GM13976 (cell line): ENCODE measurements at regions of chr9 and their contacts with region 1.

Region 1: DNA sequence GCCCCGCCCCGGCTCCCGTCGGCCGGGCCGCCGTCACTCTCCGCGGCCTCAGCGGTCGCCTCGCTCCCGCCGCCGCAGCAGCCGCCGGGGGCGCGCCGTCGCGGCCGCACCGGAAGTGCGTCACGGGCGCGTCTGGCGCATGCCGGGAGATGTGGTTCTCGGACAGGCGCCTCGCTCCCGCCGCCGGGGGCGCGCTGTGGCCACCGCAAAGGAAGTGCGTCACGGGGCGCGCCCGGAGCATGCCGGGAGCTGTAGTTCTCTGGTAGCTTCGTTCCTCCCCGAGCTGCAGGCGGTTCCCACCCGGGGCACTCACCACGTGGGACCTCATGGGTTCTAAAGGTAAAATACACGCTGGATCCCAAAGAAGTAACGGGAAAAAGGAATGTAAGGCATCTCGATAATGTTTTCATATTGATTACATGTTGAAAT is at the start of gene UBAC1:
- DNase-seq: peak; percentile 100
- CTCF ChIP-seq: no peak

Region 2: DNA sequence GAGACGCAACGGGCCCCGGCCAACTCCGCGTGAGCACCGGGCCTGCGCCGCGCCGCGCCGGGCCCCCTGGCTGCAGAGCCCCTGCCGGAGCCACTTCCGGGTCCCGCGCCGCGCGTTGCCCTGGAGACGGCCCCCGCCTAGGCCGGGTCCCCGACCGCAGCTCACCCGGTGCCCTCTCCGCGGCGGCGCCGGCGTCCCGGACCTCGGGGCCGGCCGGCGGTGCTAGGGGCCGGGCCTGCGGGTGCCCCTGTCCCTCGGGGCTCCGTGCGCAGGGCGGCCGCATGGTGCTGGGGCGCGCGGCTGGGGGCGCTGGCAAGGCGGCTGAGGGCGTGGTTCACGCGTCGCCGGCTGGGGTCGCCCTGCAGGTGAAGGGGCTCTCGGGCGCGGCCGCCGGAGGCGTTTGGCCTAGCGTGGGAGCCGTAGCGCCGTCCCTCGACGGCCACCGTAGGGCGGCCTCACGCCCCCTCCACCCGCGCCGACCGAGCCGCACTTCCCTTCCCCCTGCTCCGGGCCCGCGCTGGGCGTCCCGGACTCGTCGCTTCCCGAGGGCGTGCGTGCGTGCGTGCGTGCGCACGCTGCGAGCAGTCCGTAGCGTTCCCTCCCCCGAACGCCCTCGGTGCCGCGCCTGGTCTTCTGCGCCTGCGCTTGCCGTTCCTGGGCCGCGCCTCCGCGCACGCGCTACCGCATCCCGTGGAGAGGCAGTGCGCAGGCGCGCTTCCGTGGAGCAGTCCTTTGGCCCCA is 157.2 kb after region 1 on chr9 and contains the start of gene TMEM250:
- in situ Hi-C with region 1: loop called (anchors 10 kb)
- DNase-seq: peak; percentile 97
- CTCF ChIP-seq: peak; percentile 24